SK-N-SH (cell line): ENCODE measurements at regions of chr2 and their contacts with region 1.

Region 1: DNA sequence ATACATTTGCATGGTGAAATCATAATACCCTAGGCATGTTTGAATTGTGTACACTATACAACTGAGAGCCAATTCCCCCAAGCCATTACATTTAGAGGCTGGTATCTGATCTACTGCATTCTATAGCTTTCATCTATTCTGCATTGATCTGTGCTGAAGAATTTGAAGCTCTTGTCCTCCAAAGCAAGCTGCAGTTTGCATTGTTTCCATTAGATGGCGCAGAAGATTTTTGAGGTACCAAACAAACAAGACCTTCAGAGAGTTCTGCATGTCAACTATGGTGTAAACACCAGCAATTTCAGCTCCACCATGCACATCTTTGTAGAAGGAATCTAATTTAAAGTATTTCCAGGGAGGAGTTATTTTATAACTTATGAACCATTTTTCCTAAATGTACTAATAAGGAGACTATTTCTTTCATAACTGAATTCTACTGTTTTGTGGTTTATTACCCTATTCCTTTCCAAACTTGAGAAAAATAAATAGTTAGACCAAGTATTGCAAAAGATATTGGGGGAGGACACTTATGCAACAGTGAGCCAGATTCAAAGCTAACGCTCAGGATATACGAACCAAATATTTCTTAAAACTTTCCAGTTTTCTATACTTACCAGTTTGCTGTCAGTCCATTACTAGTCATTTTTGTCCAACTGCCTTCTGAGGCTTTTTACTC is 761.8 kb upstream of the ACVR2A start:
- DNase-seq: peak; percentile 19
- H3K4me3 ChIP-seq: no peak overlapping the region; a peak in 1 of 4 replicates
- H3K27ac ChIP-seq: no peak overlapping the region
- H3K4me1 ChIP-seq: no peaks in the 10 kb centered on the region
- H3K27me3 ChIP-seq: no peaks in the 10 kb centered on the region
- CTCF ChIP-seq: peak; percentile 89
- EP300 ChIP-seq: no peak
- RAD21 ChIP-seq: peak; percentile 70

Region 2: DNA sequence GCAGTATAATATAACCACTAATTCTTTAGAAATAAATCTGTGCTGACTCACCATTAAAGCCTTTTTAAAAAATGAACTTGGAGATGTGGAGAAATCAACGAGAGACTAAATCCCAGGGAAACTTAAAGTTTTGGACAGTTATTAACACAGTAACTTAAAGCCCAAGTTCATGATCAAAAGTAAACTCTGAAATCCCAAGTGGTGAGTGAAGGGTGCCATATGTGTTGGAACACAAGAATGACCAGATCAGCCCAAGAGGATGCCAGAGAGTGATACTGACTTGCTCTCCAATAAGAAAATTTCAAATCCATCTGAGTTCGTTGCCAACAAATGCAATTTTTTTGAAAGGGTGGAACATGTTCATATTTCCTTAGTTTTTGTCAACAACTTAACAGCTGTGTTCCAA is 76.2 kb before region 1 on chr2:
- CTCF ChIA-PET with region 1: no interaction called
- POLR2A ChIA-PET with region 1: no interaction called
- DNase-seq: no peak
- H3K4me3 ChIP-seq: no peak overlapping the region
- H3K27ac ChIP-seq: no peak overlapping the region
- H3K4me1 ChIP-seq: no peaks in the 10 kb centered on the region; a peak in 1 of 4 replicates
- H3K27me3 ChIP-seq: no peaks in the 10 kb centered on the region
- CTCF ChIP-seq: no peak
- EP300 ChIP-seq: no peak
- RAD21 ChIP-seq: no peak

Region 3: DNA sequence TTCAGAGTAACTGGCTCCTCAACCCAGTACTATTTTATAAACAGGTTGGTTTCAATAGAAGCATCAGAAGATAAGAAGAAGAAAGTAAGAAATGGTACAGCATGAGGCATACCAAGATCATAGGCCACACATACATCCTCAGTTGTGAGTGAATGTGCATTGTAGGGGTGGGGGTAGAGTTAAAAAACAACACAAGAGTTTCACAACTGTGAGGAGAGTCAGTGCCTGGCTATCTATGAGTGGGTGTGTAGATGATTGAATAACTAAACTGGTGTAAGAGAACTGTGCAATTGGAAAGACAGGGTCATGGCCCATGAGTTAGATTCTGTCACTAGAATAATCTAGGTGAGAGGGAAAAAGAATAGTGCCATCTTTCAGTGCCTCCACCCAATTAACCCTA is 13.7 kb after region 1 on chr2:
- CTCF ChIA-PET with region 1: interaction called, 10 read pairs
- POLR2A ChIA-PET with region 1: no interaction called
- DNase-seq: no peak
- H3K4me3 ChIP-seq: no peak overlapping the region
- H3K27ac ChIP-seq: no peak overlapping the region
- H3K4me1 ChIP-seq: no peaks in the 10 kb centered on the region; a peak in 1 of 4 replicates
- H3K27me3 ChIP-seq: no peaks in the 10 kb centered on the region
- CTCF ChIP-seq: no peak
- EP300 ChIP-seq: no peak
- RAD21 ChIP-seq: no peak

Region 4: GRCh38 chr2:147910990-147911473 is 828.0 kb after region 1 on chr2:
- CTCF ChIA-PET with region 1: interaction called, 31 read pairs
- POLR2A ChIA-PET with region 1: no interaction called
- DNase-seq: no peak
- H3K4me3 ChIP-seq: no peak overlapping the region; a peak in 1 of 4 replicates
- H3K27ac ChIP-seq: no peak overlapping the region
- H3K4me1 ChIP-seq: peaks cover 16 to 18% of the 10 kb centered on the region in 2 experiments; a peak in 3 of 4 replicates
- H3K27me3 ChIP-seq: no peaks in the 10 kb centered on the region
- CTCF ChIP-seq: peak; percentile 87
- EP300 ChIP-seq: no peak
- RAD21 ChIP-seq: peak; percentile 89